ENCODE measurements at regions of chr13 and their contacts with region 1.

Region 1: DNA sequence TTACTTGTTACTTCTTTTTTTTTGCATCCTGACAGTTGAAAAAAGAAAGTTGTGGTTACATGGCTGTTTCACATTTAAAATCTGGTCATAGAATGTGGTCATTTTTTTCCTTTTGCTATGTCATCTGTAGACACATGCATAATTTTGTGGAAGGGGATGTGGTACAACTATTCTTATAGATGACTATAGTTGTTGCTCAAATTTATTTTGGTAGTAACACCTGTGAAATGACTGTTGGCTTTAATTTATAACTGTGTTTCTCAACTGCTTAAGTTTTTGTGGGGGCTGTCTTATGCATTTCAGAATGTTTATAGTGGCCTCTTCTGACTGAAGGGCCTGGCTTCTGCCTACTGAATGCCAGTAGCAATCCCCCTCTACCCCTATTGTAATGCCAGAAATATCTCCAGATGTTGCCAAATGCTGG is 130.5 kb downstream of the PAN3 start:
- DNase-seq: no peak
- ATAC-seq: no peak
- H3K4me3 ChIP-seq: no peak overlapping the region
- H3K27ac ChIP-seq: no peak overlapping the region
- H3K4me1 ChIP-seq: no peaks in the 10 kb centered on the region
- H3K27me3 ChIP-seq: no peaks in the 10 kb centered on the region
- CTCF ChIP-seq: no peak
- POLR2A ChIP-seq: no peak
- RAD21 ChIP-seq: no peak

Region 2: GRCh38 chr13:28282451-28282850 is 13.6 kb after region 1 on chr13:
- CTCF ChIA-PET with region 1: no interaction called
- POLR2A ChIA-PET with region 1: no interaction called
- dilution Hi-C with region 1: no loop called
- in situ Hi-C with region 1: no loop called
- intact Hi-C with region 1: loop called (anchors 1 kb)
- DNase-seq: no peak
- ATAC-seq: no peak
- H3K4me3 ChIP-seq: no peak overlapping the region
- H3K27ac ChIP-seq: no peak overlapping the region
- H3K4me1 ChIP-seq: no peaks in the 10 kb centered on the region
- H3K27me3 ChIP-seq: no peaks in the 10 kb centered on the region
- CTCF ChIP-seq: no peak
- POLR2A ChIP-seq: no peak
- RAD21 ChIP-seq: no peak

Region 3: DNA sequence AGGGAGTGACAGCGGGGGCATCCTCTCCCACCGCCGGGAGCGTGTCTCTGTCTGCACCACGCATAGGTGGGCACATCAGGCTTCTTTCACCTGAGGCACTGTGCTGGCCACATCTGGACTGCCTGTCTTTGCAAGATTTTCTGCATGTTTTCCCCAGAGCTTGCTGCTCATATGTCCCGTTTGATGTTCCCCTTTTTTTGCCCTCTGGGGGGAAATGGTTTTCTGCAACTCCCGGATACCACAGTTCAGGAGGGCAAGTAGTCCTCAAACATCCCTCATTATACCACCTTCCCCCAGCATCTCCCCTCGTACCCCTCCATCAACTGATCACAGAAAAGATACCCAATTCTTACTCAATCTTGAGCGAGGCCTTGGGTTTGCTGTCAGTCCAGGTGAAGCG is 37.5 kb after region 1 on chr13:
- CTCF ChIA-PET with region 1: no interaction called
- POLR2A ChIA-PET with region 1: no interaction called
- dilution Hi-C with region 1: no loop called
- in situ Hi-C with region 1: no loop called
- intact Hi-C with region 1: no loop called
- DNase-seq: no peak
- ATAC-seq: no peak
- H3K4me3 ChIP-seq: no peak overlapping the region
- H3K27ac ChIP-seq: no peak overlapping the region
- H3K4me1 ChIP-seq: no peaks in the 10 kb centered on the region
- H3K27me3 ChIP-seq: no peaks in the 10 kb centered on the region; the same call in 1 of the 2 replicates
- CTCF ChIP-seq: no peak
- POLR2A ChIP-seq: no peak
- RAD21 ChIP-seq: no peak

Measured in IMR-90 (cell line).